Caco-2 (cell line): ENCODE measurements at regions of chr10 and their contacts with region 1.

Region 1: DNA sequence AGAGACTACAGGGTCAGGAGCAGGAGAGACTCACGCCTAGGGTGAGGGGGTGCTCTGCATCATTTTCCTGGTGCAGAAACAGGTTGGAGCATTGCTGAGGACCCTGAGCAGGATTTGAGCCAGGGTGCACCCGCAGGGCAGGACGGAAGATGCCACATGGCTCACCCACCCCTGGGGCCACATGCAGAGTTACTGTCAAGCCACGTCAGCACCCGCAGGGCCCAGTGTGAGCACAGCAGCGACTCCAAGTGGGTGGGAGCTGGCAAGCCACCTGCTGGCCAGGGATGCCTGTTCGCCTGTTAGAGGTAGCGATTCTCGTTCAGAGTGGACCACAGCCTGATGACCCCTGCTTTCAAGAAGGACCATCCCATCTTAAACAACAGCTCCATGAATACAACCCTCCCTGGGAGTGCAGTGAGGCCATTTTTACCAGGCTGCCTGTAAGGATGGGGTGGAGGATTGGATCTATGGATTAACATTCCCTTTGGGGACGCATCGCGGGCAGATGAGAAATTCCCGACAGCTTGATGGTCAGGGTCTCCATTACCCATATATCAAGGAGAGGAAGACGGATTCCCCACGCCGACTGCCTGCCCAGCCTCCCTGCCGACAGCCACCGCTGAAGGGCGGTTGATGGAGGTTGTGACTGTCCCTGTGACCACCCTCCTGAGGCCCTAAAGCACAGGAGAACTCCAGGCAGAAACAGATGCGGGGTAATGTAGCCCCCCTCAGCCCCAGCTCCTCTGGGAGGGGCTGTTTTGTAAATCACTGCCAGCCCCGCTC is 101.1 kb upstream of the RET start:
- DNase-seq: peak; percentile 50 to 60
- H3K4me3 ChIP-seq: no peak overlapping the region
- H3K4me3 Mint-ChIP-seq: no peak overlapping the region
- H3K27ac Mint-ChIP-seq: no peak overlapping the region
- H3K4me1 ChIP-seq: no peaks in the 10 kb centered on the region
- H3K4me1 Mint-ChIP-seq: no peaks in the 10 kb centered on the region
- H3K27me3 ChIP-seq: no peaks in the 10 kb centered on the region; the same call in 1 of the 2 replicates
- H3K27me3 Mint-ChIP-seq: peaks cover 3% of the 10 kb centered on the region
- CTCF ChIP-seq: peak; percentile 20 to 61

Region 2: GRCh38 chr10:43105102-43105785 is 129.5 kb after region 1 on chr10:
- CTCF ChIA-PET with region 1: no interaction called
- POLR2A ChIA-PET with region 1: no interaction called
- intact Hi-C with region 1: loop called (anchors 10 kb)
- DNase-seq: peak; percentile 80 to 91
- H3K4me3 ChIP-seq: peak overlapping the region; percentile 48
- H3K4me3 Mint-ChIP-seq: peak overlapping the region; percentile 68
- H3K27ac Mint-ChIP-seq: no peak overlapping the region
- H3K4me1 ChIP-seq: no peaks in the 10 kb centered on the region
- H3K4me1 Mint-ChIP-seq: no peaks in the 10 kb centered on the region
- H3K27me3 ChIP-seq: peaks cover 3% of the 10 kb centered on the region
- H3K27me3 Mint-ChIP-seq: peaks cover 18% of the 10 kb centered on the region
- CTCF ChIP-seq: peak; percentile 99